ENCODE measurements at regions of chr1 and their contacts with region 1.

Region 1: GRCh38 chr1:1033009-1033587 is 13.2 kb downstream of the AGRN start:
- DNase-seq: no peak
- H3K4me3 ChIP-seq: peak overlapping the region; percentile 54 to 69 (median 56)
- H3K27ac ChIP-seq: no peak overlapping the region
- H3K4me1 ChIP-seq: peaks cover 19 to 35% (median 26%) of the 10 kb centered on the region in 4 donors
- H3K27me3 ChIP-seq: peaks cover 10 to 53% (median 13%) of the 10 kb centered on the region in 4 donors
- CTCF ChIP-seq: peak; percentile 66 to 81 (median 75)
- EP300 ChIP-seq: no peak
- POLR2A ChIP-seq: no peak

Region 2: DNA sequence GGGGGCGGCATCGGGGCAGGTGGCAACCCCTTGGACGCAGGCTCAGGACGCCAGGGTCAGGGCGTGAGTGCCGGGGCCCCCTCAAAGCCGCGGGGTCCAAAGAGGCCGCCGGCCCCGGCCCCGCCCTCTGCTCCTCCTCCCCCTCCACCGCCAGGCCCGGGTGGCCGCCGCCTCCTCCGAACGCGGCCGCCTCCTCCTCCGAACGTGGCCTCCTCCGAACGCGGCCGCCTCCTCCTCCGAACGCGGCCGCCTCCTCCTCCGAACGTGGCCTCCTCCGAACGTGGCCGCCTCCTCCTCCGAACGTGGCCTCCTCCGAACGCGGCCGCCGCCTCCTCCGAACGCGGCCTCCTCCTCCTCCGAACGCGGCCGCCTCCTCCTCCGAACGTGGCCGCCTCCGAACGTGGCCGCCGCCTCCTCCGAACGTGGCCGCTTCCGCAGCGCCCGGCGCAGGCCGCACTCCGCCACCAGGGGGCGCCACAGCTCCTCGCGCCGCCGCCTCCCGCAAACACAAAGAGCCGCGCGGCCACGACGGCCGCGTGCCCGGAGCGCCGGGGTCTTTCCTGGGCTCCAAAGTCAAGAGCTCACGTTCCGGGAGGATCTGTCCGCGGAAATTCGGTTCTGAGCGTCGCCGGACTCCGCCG is 128.7 kb before region 1 on chr1:
- intact Hi-C with region 1: no loop called
- DNase-seq: peak; percentile 95
- H3K4me3 ChIP-seq: peak overlapping the region; percentile 44 to 60 (median 54)
- H3K27ac ChIP-seq: peak overlapping the region in 3 of 4 donors; percentile 20 to 55 (median 43)
- H3K4me1 ChIP-seq: peaks cover 15 to 38% (median 34%) of the 10 kb centered on the region in 4 donors
- H3K27me3 ChIP-seq: peaks cover 0 to 62% (median 0%) of the 10 kb centered on the region in 4 donors
- CTCF ChIP-seq: peak; percentile 90 to 99 (median 95)
- EP300 ChIP-seq: no peak
- POLR2A ChIP-seq: no peak

Region 3: DNA sequence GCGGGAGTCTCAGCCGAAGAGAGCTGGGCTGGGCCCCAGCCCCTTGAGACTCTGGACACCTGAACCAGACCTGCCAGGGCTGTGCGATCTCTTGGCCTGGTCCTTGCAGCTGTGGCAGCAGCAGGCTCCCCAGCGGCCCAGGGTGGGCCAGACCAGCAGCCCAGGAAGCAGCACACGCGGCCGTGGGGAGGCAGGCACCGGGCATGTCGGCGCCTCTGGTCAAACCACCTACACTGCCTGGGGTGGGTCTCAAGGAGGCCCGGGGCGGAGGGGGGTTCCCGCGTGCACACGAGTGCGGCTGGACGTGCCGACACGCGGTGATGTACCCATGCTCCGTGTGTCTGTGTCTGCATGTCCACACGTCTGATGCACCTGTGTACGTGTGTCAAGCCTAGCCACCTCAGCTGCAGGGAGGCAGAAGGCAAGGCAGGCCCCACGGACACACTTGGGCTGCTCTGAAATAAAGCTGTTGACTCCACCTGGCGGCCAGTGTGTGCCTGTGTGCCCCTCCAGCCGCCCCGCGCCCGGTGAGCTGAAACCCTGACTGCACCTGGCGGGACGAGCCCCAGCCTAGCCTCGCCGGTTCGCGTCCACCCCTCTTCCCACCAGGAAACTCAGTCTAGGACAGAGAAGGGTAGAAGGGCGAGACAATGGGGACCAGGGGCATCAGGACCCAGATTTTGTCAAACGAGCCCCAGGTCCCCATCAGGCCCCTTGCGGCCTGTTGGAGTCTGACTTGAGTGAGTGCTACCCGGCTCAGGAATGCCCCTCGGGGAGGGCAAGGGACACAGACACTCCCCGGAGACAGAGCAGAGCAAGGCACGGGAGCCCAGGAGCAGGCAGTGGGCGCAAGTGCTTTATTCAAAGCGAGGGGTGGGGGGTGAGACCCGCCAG is 258.7 kb after region 1 on chr1:
- intact Hi-C with region 1: loop called (anchors 5 kb)
- DNase-seq: peak; percentile 93
- H3K4me3 ChIP-seq: no peak overlapping the region
- H3K27ac ChIP-seq: no peak overlapping the region
- H3K4me1 ChIP-seq: peaks cover 0 to 20% (median 14%) of the 10 kb centered on the region in 4 donors
- H3K27me3 ChIP-seq: peaks cover 0 to 12% (median 0%) of the 10 kb centered on the region in 4 donors
- CTCF ChIP-seq: peak; percentile 56 to 74 (median 66)
- EP300 ChIP-seq: no peak
- POLR2A ChIP-seq: no peak

Measured in esophagus muscularis mucosa (tissue), 4 donors.